HCT116 (cell line): ENCODE measurements at regions of chr12 and their contacts with region 1.

Region 1: GRCh38 chr12:49121047-49121696 is 10.0 kb downstream of the TUBA1B start:
- DNase-seq: peak; percentile 69
- ATAC-seq: peak; percentile 95
- H3K4me3 ChIP-seq: no peak overlapping the region
- H3K27ac ChIP-seq: no peak overlapping the region
- H3K4me1 ChIP-seq: peaks cover 2 to 7% of the 10 kb centered on the region in 2 experiments; a peak in 1 of 4 replicates
- H3K27me3 ChIP-seq: no peaks in the 10 kb centered on the region
- CTCF ChIP-seq: peak; percentile 70 to 79 (median 77); a peak in 5 of 6 replicates
- POLR2A ChIP-seq: no peak
- RAD21 ChIP-seq: peak; percentile 86

Region 2: DNA sequence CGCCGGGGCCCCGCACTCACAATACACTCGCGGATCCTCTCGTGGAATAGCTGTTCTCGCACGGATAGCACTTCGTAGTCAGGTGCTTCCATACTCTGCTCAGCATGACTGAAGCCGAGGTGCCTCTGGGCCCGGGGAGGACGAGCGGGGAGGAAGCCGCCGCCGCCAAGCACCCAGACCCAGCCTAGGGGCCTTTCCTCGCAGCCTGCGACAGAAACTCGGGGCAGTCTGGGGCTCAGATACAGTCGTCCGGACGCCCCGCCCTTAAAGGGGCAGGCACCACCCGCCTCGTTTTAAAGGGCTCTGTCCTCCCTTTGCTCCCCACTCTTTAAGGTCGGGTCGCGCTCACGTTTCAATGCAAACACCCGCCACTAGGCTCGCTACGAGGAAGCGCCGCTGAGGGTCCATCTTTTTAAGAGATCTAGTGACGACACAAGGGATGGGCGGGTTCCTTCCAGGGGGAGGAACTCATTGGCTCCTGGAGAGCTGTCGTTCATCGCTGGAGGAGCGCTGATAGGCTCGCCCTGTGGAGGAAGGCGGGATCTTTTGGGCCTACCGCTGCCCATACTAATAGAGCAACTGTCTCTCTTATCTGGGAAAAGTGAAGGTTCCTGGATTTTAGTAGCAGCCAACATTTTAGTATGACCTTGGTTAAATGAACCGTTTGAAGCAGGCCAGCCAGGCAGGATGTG is 10.6 kb before region 1 on chr12 and contains the start of gene LMBR1L:
- CTCF ChIA-PET with region 1: interaction called, 18 read pairs
- POLR2A ChIA-PET with region 1: interaction called, 6 read pairs
- RAD21 ChIA-PET with region 1: no interaction called
- intact Hi-C with region 1: no loop called
- DNase-seq: peak; percentile 96
- ATAC-seq: peak; percentile 98
- H3K4me3 ChIP-seq: peak within 1 kb of the TSS; percentile 90 to 97
- H3K27ac ChIP-seq: peak within 1 kb of the TSS; percentile 62
- H3K4me1 ChIP-seq: peaks cover 6 to 29% of the 10 kb centered on the region in 2 experiments; a peak in 3 of 4 replicates
- H3K27me3 ChIP-seq: no peaks in the 10 kb centered on the region
- CTCF ChIP-seq: peak in 2 of 3 experiments; percentile 20 to 50; a peak in 3 of 6 replicates
- POLR2A ChIP-seq: peak; percentile 63
- RAD21 ChIP-seq: no peak
- total RNA-seq, gene LMBR1L: 44.4 TPM

Region 3: DNA sequence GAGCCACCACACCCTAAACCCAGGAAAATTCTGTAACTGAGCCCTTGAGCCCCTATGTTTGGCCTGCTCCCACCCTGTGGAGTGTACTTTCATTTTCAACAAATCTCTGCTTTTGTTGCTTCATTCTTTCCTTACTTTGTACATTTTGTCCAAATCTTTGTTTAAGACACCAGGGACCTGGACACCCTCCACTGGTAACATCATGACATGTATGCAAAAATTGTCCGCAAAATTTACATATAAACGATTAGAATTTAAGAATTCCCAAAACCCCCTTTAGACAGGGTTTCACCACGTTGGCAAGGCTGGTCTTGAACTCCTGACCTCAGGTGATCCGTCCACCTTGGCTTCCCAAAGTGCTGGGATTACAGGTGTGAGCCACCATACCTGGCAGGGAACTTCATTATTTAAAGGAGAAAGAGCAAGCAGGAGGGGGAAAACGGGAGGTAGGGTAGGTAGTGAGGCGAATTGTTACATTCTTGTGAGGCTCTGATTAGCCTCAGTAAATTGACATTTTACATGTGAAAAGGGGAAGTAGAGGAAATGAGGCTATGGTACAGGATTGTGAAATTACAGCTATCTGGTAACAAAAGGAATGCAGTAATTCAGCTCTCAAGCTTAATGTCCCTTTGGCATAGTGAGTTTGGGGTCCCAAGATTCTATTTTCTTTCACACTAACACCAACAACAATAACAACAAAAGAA is 40.1 kb after region 1 on chr12:
- CTCF ChIA-PET with region 1: no interaction called
- POLR2A ChIA-PET with region 1: no interaction called
- RAD21 ChIA-PET with region 1: no interaction called
- intact Hi-C with region 1: no loop called
- DNase-seq: no peak
- ATAC-seq: no peak
- H3K4me3 ChIP-seq: no peak overlapping the region
- H3K27ac ChIP-seq: no peak overlapping the region
- H3K4me1 ChIP-seq: no peaks in the 10 kb centered on the region
- H3K27me3 ChIP-seq: no peaks in the 10 kb centered on the region
- CTCF ChIP-seq: no peak
- POLR2A ChIP-seq: no peak
- RAD21 ChIP-seq: no peak

Region 4: DNA sequence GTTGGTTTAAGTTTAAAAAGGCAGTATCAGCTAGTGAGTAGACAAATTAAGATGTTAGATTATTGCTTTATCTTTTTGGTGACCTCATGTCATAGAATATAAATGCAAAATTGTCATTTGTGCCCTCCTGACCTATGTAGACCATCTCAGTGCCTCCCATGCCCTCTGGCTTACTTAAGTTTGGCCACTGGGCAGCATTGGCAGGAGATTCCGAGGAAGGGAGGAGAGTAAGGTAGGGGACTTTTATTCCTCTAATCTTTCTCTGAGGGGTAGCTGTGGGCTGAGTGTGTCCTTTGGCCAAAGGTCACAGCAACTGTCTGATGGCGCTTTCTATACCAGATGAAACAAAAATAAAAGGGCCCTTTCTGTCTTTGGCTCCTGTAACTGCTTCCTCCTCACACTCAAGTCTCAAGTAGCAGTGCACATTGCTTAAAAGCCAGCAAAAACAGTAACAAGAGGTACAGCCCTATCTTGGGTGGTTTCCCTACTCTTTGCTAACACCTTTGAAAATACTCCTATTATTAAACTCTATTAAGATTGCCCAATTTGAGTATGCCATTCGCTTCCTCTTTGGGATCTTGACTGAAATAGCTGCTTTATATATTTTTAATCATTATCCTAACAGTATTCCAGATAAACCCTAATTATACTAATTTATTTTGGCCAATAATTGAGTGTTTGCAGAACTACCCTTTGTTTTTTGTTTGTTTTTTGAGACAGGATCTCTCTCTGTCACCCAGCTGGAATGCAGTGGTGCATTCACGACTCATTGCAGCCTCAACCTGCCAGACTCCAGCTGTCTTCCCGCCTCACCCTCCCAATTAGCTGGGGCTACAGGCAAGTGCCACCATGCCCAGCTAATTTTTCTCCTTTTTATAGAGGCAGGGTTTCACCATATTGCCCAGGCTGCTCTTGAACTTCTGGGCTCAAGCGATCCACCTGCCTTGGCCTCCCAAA is 361.2 kb after region 1 on chr12:
- CTCF ChIA-PET with region 1: no interaction called
- POLR2A ChIA-PET with region 1: no interaction called
- RAD21 ChIA-PET with region 1: no interaction called
- intact Hi-C with region 1: no loop called
- DNase-seq: no peak
- ATAC-seq: peak; percentile 57
- H3K4me3 ChIP-seq: no peak overlapping the region
- H3K27ac ChIP-seq: peak overlapping the region; percentile 53; the same call in 1 of the 2 replicates
- H3K4me1 ChIP-seq: peaks cover 51 to 68% of the 10 kb centered on the region in 2 experiments
- H3K27me3 ChIP-seq: no peaks in the 10 kb centered on the region
- CTCF ChIP-seq: no peak
- POLR2A ChIP-seq: no peak
- RAD21 ChIP-seq: no peak